Endothelial cell of umbilical vein (primary cell): ENCODE measurements at regions of chr7 and their contacts with region 1.

Region 1: DNA sequence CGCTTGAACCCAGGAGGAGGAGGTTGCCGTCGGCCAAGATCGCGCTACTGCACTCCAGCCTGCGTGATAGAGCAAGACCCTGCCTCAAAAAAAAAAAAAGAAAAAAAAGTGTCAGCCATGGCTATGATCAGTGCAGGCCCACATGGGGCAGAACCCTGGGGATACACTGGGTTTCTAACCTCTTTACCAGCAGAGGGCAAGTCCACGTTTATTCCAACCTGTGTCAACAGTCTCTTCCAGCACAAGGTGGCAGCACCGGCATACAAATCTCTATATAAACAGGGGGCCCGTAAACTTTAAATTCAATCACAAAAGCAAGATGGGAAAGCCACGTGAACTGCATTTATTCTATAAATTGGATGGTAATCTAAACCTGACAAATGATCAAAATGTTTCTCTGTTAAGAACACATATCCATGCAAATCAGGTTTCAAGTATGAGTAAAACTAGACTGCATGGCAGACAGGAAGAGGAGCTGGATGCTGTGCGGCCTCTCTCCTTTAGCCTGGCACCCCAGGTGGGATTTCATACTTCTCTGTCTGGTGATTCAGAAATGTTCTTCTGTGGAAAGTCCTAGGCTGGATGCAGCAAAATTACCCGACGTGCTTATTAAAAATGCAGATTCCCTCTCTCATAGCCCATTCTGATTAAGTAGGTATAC is 60.0 kb upstream of the STEAP1B start:
- DNase-seq: peak; percentile 85
- H3K4me3 ChIP-seq: no peak overlapping the region
- H3K27ac ChIP-seq: peak overlapping the region; percentile 99
- H3K4me1 ChIP-seq: peaks cover 48% of the 10 kb centered on the region
- H3K27me3 ChIP-seq: peaks cover 0 to under 1% of the 10 kb centered on the region in 2 experiments
- CTCF ChIP-seq: peak; percentile 76 to 87
- POLR2A ChIP-seq: no peak

Region 2: GRCh38 chr7:22586786-22587140 is 26.8 kb after region 1 on chr7:
- CTCF ChIA-PET with region 1: interaction called, 119 read pairs
- POLR2A ChIA-PET with region 1: interaction called, 8 read pairs
- dilution Hi-C with region 1: no loop called
- intact Hi-C with region 1: loop called (anchors 1 kb)
- DNase-seq: no peak
- H3K4me3 ChIP-seq: no peak overlapping the region
- H3K27ac ChIP-seq: peak overlapping the region; percentile 95
- H3K4me1 ChIP-seq: peaks cover 75% of the 10 kb centered on the region
- H3K27me3 ChIP-seq: no peaks in the 10 kb centered on the region
- CTCF ChIP-seq: peak; percentile 34 to 56
- POLR2A ChIP-seq: no peak

Region 3: DNA sequence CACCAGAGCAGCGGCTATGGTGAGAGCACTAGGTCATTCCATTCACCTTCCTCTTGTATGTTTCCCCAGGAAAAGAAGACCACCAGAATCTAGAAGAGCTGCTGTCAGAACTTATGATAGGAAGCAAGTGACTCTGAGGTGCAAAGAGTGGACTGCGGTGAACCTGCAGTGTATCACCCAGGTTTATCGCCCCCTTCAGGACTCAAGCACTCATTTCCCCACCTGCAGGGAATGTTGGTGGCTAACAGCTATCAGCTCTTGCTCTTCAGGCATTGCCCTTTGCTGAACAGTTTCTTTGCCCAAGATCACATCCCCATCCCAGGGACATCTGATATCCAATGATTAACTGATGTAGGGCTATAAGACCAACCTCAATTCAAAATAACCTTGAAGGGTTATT is 100.8 kb after region 1 on chr7:
- CTCF ChIA-PET with region 1: interaction called, 9 read pairs
- POLR2A ChIA-PET with region 1: no interaction called
- dilution Hi-C with region 1: no loop called
- intact Hi-C with region 1: loop called (anchors 1 kb)
- DNase-seq: no peak
- H3K4me3 ChIP-seq: no peak overlapping the region
- H3K27ac ChIP-seq: no peak overlapping the region
- H3K4me1 ChIP-seq: peaks cover 23% of the 10 kb centered on the region
- H3K27me3 ChIP-seq: no peaks in the 10 kb centered on the region
- CTCF ChIP-seq: peak in 1 of 2 donors; percentile 33
- POLR2A ChIP-seq: no peak

Region 4: GRCh38 chr7:22718200-22718711 is 158.3 kb after region 1 on chr7:
- CTCF ChIA-PET with region 1: interaction called, 450 read pairs
- POLR2A ChIA-PET with region 1: interaction called, 5 read pairs
- dilution Hi-C with region 1: no loop called
- intact Hi-C with region 1: no loop called
- DNase-seq: peak; percentile 91
- H3K4me3 ChIP-seq: peak overlapping the region in 1 of 3 experiments; percentile 9
- H3K27ac ChIP-seq: peak overlapping the region; percentile 92
- H3K4me1 ChIP-seq: peaks cover 33% of the 10 kb centered on the region
- H3K27me3 ChIP-seq: no peaks in the 10 kb centered on the region
- CTCF ChIP-seq: no peak
- POLR2A ChIP-seq: peak; percentile 47

Region 5: DNA sequence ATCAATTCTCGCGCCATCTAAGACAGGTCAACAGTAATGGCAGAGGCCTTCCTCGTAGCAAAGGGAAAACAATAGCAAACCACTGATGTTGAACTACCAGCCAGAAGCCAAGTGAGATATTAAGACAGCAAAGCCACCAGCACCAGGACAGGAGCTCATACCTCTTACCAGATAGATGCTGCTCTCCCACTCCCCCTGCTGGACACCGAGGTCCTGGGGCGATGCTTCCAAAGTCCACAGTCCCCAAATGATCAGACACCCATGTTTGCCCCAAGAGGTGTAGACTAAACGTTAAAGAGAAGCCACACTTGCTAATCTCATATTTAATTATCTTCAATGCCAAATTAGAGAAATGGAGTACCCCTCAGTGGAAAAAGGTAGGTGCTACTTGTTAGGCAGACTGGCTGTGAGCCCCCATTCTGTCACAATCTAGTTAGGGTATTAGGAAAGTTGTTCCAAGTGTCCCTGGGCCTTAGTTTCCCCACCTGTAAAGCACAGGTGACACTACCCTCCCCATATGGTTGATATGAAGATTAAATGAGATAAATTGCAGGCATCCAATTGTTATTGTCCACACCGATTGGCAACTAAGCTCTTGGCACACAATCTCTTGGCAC is 222.8 kb after region 1 on chr7:
- CTCF ChIA-PET with region 1: interaction called, 266 read pairs
- POLR2A ChIA-PET with region 1: no interaction called
- dilution Hi-C with region 1: no loop called
- intact Hi-C with region 1: loop called (anchors 1 kb)
- DNase-seq: peak; percentile 65
- H3K4me3 ChIP-seq: no peak overlapping the region
- H3K27ac ChIP-seq: no peak overlapping the region
- H3K4me1 ChIP-seq: no peaks in the 10 kb centered on the region
- H3K27me3 ChIP-seq: no peaks in the 10 kb centered on the region
- CTCF ChIP-seq: peak; percentile 94 to 95
- POLR2A ChIP-seq: no peak

Region 6: DNA sequence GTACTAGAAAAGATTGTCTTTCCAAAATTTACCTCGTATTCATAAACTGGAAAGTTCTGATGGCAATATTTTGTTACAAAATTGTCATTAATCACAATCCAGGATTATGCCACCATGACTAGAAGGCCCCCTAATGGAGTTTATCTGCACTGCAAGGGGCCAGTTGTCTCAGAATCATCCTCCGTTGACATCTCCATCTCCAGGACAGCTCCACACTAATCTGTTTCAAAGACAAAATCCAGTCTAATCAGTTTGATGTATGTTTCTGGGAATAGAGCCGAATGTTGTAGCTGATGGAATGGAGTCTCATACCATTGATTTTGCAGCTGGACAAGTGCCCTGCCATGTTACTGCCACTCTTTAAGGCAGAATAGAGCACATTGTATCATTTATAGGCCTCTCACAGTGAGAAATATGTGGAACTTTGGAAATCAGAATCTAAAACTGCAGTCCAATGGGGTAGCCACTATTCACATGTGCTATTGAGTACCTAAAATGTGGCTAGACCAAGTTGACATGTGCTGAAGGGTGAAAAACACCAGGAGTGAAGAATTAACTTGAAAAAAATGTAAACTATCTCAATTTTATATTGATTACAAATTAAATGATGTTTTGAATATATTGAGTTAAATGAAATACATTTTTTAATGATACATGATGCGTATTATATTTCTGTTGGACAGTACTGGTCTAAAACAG is 301.0 kb after region 1 on chr7:
- CTCF ChIA-PET with region 1: interaction called, 11 read pairs
- POLR2A ChIA-PET with region 1: interaction called, 6 read pairs
- dilution Hi-C with region 1: no loop called
- intact Hi-C with region 1: loop called (anchors 1 kb)
- DNase-seq: peak; percentile 21
- H3K4me3 ChIP-seq: no peak overlapping the region
- H3K27ac ChIP-seq: no peak overlapping the region
- H3K4me1 ChIP-seq: peaks cover 27% of the 10 kb centered on the region
- H3K27me3 ChIP-seq: no peaks in the 10 kb centered on the region
- CTCF ChIP-seq: peak; percentile 46 to 65
- POLR2A ChIP-seq: no peak